Lower leg skin (tissue), 4 donors: ENCODE measurements at regions of chr20 and their contacts with region 1.

Region 1: GRCh38 chr20:20860078-20860806 is 147.8 kb upstream of the RALGAPA2 start:
- DNase-seq: peak; percentile 82 to 96
- H3K4me3 ChIP-seq: no peak overlapping the region
- CTCF ChIP-seq: peak in 1 of 3 donors; percentile 62
- POLR2A ChIP-seq: no peak

Region 2: GRCh38 chr20:20096421-20096820 is 763.8 kb before region 1 on chr20:
- intact Hi-C with region 1: no loop called
- DNase-seq: peak; percentile 45 to 88
- H3K4me3 ChIP-seq: no peak overlapping the region
- CTCF ChIP-seq: no peak
- POLR2A ChIP-seq: no peak

Region 3: DNA sequence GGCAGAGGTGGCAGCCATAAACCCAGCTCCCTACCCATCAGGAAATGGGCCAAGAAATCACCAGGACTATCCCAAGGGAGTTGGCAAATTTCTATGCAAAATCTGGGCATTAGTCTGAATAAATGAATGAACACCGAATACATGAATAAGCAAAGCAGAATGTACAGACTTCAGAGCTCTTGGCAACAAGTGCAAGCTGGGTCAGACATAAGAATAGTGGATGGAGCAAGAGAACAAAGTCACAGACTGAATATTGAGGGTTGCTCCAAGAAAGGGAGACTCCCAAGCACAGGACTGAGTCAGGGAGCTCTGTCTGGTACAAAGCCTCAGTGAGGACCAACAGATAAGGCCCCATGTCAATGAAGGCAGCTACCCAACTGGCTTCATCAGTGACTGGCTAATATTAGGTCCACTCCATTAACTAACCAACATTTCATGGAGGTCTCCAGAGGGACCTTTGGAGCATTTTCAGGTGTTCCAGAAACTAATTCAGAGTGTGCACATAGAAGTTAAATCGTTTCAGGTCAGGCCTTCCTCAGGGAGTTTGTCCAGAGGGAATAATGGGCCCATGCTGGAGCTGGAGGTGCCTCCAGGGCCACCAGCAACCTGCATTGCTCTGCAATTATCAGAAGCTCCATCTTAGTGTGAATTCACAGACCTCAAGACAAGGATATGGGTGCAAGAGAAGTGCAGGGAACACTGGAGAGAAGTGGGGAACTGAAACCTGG is 43.7 kb after region 1 on chr20:
- intact Hi-C with region 1: no loop called
- DNase-seq: no peak
- H3K4me3 ChIP-seq: no peak overlapping the region
- CTCF ChIP-seq: no peak
- POLR2A ChIP-seq: no peak

Region 4: DNA sequence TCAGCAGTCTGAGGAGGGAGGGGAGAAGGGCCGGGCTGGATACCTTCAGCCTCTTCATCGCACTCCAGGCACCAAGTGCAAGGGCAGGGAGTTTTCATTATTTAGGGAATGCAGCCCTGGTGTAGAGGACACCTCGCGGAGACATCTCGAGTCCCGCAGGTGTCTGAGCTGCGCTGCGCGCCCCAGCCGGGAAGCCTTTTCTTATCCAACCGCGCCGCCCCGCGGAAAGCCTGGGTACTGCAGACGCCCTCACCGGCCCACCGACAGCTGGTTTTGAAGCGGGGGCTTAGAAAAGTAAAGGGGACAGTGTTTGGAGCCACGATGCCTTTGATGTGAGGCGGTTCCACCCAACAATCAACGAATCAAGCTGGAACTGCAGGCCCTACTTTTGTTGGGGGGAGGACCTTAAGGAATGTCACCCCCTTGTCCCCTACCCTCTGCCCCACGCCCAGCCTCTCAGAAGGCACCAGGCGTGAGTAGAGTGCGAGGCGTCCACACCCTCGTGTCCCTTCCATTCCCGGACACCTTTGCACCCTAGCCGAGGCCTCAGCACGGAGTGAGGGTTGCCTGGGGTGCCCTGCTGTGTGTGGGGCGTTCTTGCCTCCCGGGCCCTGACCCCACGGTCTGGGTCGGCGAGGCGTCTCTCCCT is 645.0 kb after region 1 on chr20:
- intact Hi-C with region 1: loop called (anchors 5 kb)
- DNase-seq: peak in 1 of 2 donors; percentile 40
- H3K4me3 ChIP-seq: no peak overlapping the region
- CTCF ChIP-seq: peak in 1 of 3 donors; percentile 92
- POLR2A ChIP-seq: no peak

Region 5: GRCh38 chr20:21571841-21572690 is 711.8 kb after region 1 on chr20:
- intact Hi-C with region 1: loop called (anchors 10 kb)
- DNase-seq: peak in 1 of 2 donors; percentile 75
- H3K4me3 ChIP-seq: no peak overlapping the region
- CTCF ChIP-seq: peak in 1 of 3 donors; percentile 14
- POLR2A ChIP-seq: no peak